Activated T-helper 2 cell treated with anti-CD3 and anti-CD28 coated beads, Interferon-gamma antibody, Interleukin-2, Interleukin-4, amounts not matched to agents 10 μg/mL and 5 μg/mL and 100 μg/mL, durations not matched to agents 14 hours and 24 hours and 36 hours (primary cell): ENCODE measurements at regions of chr2 and their contacts with region 1.

Region 1: DNA sequence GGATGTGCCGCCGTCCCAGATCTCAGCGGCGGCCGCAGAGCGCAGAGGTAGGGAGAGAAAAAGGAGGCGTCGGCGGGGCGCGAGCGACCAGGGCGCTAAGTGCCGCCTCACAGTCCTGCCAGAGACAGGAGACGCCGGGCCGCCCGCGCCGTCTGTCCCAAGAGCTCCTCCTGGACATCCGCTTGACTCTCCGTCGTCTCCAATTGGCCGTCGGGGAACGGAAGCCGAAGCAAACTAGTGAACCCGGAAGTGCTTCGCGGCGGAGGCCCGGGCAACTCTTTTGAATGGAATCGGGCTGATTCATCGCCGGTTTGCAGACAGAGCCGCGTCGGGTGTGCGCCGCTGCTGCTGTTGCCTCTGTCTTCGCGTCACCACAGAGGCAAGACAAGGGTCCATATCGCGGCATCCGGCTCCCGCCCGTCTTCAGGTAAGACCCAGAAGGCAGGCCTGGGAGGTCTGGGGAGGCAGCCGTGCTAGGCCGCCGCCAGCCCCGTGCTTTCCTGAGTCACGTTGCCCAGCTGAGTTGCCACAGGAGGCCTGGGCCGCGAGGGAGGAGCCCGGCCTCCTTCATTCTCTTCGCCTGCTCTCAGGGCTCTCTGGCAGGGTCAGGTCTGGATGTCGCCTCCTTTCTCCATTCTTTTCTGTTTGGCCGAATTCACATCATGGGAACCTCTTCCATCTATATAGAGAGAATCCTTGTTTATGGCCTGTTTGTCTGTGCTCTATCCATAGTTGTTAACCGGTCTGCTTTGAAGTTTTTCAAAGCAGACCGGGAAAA is at the start of gene PSMD14:
- DNase-seq: peak; percentile 89
- H3K4me3 Mint-ChIP-seq: peak within 1 kb of the TSS; percentile 99
- H3K27ac Mint-ChIP-seq: peak within 1 kb of the TSS; percentile 97
- H3K4me1 Mint-ChIP-seq: peaks cover 30% of the 10 kb centered on the region
- H3K27me3 Mint-ChIP-seq: peaks cover 2% of the 10 kb centered on the region
- total RNA-seq, gene PSMD14: 106 and 110 TPM in 2 replicates

Region 2: DNA sequence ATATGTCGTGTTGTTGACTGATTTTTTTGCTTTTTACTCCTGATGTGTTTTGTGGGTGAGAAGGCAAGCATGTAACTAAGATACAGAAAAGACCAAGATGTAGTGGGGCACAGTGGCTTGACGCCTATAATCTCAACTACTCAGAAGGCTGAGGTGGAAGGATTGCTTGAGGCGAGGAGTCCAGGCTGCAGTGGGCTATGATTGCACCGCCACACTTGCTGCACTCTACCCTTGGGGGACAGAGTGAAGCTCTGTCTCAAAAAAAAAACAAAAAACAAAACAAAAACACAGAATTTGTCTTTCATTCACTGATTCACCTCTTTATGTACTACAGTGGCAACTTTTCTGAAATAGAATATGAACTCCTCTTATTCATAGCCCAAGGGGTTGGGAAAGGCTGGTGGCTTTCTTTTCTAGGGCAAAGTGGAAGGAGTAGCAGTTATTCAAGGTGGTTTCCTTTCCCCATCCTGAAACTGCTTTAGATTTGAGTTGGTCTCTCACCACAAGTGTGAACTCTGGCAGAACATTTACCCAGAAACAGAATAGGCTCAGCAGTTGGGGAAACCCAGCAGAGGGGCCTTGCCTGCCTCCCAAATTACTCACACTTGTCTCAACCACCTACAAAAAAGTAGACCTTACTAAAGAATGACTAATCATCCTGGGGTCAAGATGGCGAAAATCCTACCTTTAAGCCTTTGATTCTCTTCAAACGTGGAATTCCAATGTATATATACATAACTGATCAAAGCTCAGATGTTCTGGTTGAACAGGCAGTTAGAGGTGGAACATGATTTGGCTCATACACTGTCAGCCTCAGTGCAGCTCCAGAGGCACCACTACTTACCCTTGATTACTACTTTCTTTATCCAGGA is 141.6 kb before region 1 on chr2:
- intact Hi-C with region 1: loop called (anchors 2 kb)
- DNase-seq: peak; percentile 58
- H3K4me3 Mint-ChIP-seq: peak overlapping the region; percentile 34
- H3K27ac Mint-ChIP-seq: peak overlapping the region; percentile 87
- H3K4me1 Mint-ChIP-seq: peaks cover 84% of the 10 kb centered on the region
- H3K27me3 Mint-ChIP-seq: no peaks in the 10 kb centered on the region

Region 3: GRCh38 chr2:161243905-161244304 is 64.5 kb before region 1 on chr2:
- intact Hi-C with region 1: loop called (anchors 1 kb)
- DNase-seq: no peak
- H3K4me3 Mint-ChIP-seq: peak overlapping the region; percentile 86
- H3K27ac Mint-ChIP-seq: peak overlapping the region; percentile 94
- H3K4me1 Mint-ChIP-seq: peaks cover 51% of the 10 kb centered on the region
- H3K27me3 Mint-ChIP-seq: no peaks in the 10 kb centered on the region

Region 4: DNA sequence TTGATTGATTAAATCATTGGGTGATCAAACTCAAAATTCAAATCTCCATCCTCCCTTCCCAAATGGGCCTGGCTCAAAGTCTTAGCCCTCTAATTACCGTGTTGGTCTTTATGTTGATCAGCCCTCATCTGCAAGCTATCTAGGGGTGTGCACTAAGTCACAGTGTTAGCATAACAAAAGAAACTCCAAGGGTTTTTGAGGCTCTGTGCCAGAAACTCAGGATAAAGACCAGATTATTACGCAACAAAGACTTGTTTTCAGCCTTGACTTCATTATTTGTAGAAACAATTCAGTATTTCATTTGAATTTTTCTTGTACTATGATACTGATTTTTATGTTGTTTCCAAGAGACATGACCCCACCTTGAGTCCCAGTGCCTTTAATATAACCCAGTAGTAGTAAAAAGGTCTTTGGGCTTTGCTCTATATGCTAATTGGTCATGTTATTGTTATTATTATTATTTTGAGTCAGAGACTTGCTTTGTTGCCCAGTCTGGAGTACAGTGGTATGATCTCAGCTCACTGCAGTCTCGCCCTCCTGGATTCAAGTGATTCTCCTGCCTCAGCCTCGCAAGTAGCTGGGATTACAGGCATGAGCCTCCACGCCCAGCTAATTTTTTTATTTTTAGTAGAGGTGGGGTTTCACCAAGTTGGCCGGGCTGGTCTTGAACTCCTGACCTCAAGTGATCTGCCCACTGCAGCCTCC is 13.7 kb after region 1 on chr2:
- intact Hi-C with region 1: no loop called
- DNase-seq: no peak
- H3K4me3 Mint-ChIP-seq: no peak overlapping the region
- H3K27ac Mint-ChIP-seq: no peak overlapping the region
- H3K4me1 Mint-ChIP-seq: peaks cover 15% of the 10 kb centered on the region
- H3K27me3 Mint-ChIP-seq: no peaks in the 10 kb centered on the region

Region 5: GRCh38 chr2:161357097-161357496 is 48.7 kb after region 1 on chr2:
- intact Hi-C with region 1: loop called (anchors 5 kb)
- DNase-seq: no peak
- H3K4me3 Mint-ChIP-seq: no peak overlapping the region
- H3K27ac Mint-ChIP-seq: no peak overlapping the region
- H3K4me1 Mint-ChIP-seq: peaks cover 18% of the 10 kb centered on the region
- H3K27me3 Mint-ChIP-seq: no peaks in the 10 kb centered on the region

Region 6: DNA sequence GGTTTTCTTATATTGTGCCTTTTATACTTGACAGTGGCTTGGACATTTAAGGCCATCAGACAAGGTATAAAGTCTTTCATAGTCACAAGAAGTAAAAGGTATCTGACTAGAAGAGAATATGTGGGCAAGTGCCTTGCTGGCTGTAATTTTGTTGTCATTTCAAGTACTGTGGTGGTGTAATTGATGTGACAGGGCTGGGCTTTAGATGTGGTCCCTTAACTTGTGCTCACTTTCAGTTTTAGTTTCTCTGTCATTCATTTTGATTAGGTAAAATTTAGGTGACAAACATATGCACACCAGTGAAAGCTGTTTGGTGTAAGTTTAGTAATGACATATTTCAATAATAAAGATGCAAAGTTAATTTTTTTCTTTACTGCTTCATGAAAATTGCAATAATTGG is 76.5 kb after region 1 on chr2:
- intact Hi-C with region 1: loop called (anchors 2 kb)
- DNase-seq: peak; percentile 24
- H3K4me3 Mint-ChIP-seq: peak overlapping the region; percentile 45
- H3K27ac Mint-ChIP-seq: no peak overlapping the region
- H3K4me1 Mint-ChIP-seq: peaks cover 31% of the 10 kb centered on the region
- H3K27me3 Mint-ChIP-seq: no peaks in the 10 kb centered on the region

Region 7: DNA sequence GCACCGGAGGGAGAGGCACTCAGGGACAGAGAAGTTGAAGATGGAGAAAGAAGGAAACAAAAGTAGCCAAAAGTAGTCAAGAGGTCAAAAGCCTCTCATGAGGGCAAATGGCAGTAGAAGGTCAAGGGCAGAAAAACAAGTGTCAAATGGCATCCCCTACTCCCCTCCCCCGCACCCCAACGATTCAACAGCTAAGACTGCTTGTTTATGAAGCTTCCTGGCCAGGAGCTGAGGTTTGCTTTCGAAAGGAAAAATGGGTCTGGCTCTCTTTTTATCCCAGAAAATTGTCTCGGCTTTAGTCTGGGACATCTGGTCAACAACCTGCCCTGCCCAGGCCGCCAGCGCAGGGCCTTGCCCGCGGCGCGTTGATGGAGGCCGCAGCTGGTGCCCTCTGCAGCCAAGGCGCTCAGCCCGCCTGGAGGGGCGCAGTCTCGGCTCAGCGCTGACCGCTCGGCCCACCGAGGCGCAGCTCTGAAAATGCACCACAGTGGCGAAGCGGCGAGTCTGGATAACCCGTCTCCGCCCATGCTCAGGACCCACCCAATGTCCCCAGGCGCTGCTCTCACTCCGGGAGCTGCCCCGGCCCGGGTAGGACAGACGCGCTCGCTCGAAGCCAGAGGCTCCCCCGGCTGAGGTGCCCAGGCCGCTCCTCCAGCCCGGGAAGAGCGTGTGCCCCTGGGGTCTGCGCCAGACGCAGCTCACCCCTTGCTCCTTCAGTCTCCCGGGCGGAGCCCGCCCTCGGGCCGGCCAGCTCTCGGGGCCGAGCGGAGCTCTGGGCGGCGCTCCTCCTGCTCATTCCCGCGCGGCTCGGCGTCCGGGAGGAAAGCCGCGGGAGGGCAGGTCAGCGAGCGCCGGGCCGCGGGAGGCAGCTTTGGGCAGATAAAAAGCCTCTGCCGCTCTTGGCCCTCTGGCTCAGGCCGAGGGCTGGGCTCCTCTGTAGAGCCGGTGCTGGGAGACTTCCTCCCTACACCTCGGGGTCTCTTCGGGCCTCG is 106.0 kb after region 1 on chr2:
- intact Hi-C with region 1: loop called (anchors 5 kb)
- DNase-seq: peak; percentile 10
- H3K4me3 Mint-ChIP-seq: peak overlapping the region; percentile 31
- H3K27ac Mint-ChIP-seq: no peak overlapping the region
- H3K4me1 Mint-ChIP-seq: peaks cover 46% of the 10 kb centered on the region
- H3K27me3 Mint-ChIP-seq: peaks cover 52% of the 10 kb centered on the region

Region 8: DNA sequence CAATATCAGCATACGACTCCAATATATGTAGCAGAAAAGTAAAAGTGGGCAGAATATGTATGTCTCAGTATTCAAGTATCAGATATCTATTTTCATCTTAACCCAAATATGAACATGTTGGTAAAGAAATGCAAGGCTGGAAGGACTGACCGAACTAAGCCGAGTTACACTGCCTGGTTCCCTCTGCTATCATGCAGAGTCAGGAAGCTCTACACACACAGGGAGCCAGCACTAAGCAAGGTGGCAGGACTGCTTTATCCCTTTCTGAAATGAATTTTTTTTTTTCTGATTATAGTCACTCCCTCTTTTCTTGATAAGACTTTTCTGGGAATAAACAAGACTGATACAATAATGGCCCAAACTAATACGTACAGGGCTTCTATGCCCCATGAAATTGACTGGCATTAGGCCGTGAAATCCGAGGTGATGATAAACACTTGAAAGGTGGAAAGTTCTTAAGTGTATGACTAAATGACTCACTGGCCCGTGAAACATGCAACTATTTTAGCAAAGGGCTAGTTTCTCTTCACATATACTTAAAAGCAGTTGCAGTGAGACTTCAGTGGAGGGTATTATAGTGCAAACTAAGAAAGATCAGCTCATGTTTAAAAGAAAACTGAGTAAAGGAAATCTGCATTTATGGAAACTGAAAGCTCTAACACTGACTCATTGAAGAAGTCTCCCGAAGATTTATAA is 750.8 kb after region 1 on chr2:
- intact Hi-C with region 1: loop called (anchors 5 kb)
- DNase-seq: no peak
- H3K4me3 Mint-ChIP-seq: peak overlapping the region; percentile 52
- H3K27ac Mint-ChIP-seq: peak overlapping the region; percentile 87
- H3K4me1 Mint-ChIP-seq: peaks cover 87% of the 10 kb centered on the region
- H3K27me3 Mint-ChIP-seq: no peaks in the 10 kb centered on the region